ENCODE measurements at regions of chr6 and their contacts with region 1.

Region 1: GRCh38 chr6:2891768-2892170 is 11.3 kb downstream of the SERPINB9 start:
- DNase-seq: no peak
- ATAC-seq: no peak
- H3K4me3 ChIP-seq: no peak overlapping the region
- H3K27ac ChIP-seq: no peak overlapping the region
- H3K4me1 ChIP-seq: no peaks in the 10 kb centered on the region
- H3K27me3 ChIP-seq: no peaks in the 10 kb centered on the region
- CTCF ChIP-seq: no peak

Region 2: GRCh38 chr6:2841264-2842138 is 50.3 kb before region 1 on chr6 and contains the start of gene SERPINB1:
- CTCF ChIA-PET with region 1: no interaction called
- POLR2A ChIA-PET with region 1: no interaction called
- in situ Hi-C with region 1: no loop called
- intact Hi-C with region 1: no loop called
- DNase-seq: no peak
- ATAC-seq: peak; percentile 83
- H3K4me3 ChIP-seq: peak within 1 kb of the TSS; percentile 49 to 75
- H3K27ac ChIP-seq: peak within 1 kb of the TSS; percentile 87
- H3K4me1 ChIP-seq: peaks cover 51% of the 10 kb centered on the region
- H3K27me3 ChIP-seq: no peaks in the 10 kb centered on the region
- CTCF ChIP-seq: no peak
- total RNA-seq, gene SERPINB1: 40.8 TPM

Region 3: GRCh38 chr6:2863901-2864300 is 27.9 kb before region 1 on chr6:
- CTCF ChIA-PET with region 1: interaction called, 12 read pairs
- POLR2A ChIA-PET with region 1: no interaction called
- in situ Hi-C with region 1: no loop called
- intact Hi-C with region 1: no loop called
- DNase-seq: no peak
- ATAC-seq: no peak
- H3K4me3 ChIP-seq: no peak overlapping the region
- H3K27ac ChIP-seq: no peak overlapping the region
- H3K4me1 ChIP-seq: peaks cover 17% of the 10 kb centered on the region; the same call in 1 of the 2 replicates
- H3K27me3 ChIP-seq: no peaks in the 10 kb centered on the region
- CTCF ChIP-seq: no peak

Region 4: GRCh38 chr6:2931970-2932748 is 40.4 kb after region 1 on chr6:
- CTCF ChIA-PET with region 1: no interaction called
- POLR2A ChIA-PET with region 1: interaction called, 3 read pairs
- in situ Hi-C with region 1: loop called (anchors 5 kb)
- intact Hi-C with region 1: no loop called
- DNase-seq: peak; percentile 74
- ATAC-seq: peak; percentile 99
- H3K4me3 ChIP-seq: no peak overlapping the region
- H3K27ac ChIP-seq: no peak overlapping the region
- H3K4me1 ChIP-seq: no peaks in the 10 kb centered on the region
- H3K27me3 ChIP-seq: peaks cover 3% of the 10 kb centered on the region; the same call in 1 of the 2 replicates
- CTCF ChIP-seq: peak; percentile 99

Region 5: GRCh38 chr6:3258720-3259490 is 367.1 kb after region 1 on chr6 and contains the start of gene PSMG4:
- CTCF ChIA-PET with region 1: no interaction called
- POLR2A ChIA-PET with region 1: interaction called, 16 read pairs
- in situ Hi-C with region 1: no loop called
- intact Hi-C with region 1: no loop called
- DNase-seq: peak; percentile 33
- ATAC-seq: peak; percentile 93
- H3K4me3 ChIP-seq: peak within 1 kb of the TSS; percentile 86 to 94
- H3K27ac ChIP-seq: peak within 1 kb of the TSS; percentile 88
- H3K4me1 ChIP-seq: peaks cover 18% of the 10 kb centered on the region
- H3K27me3 ChIP-seq: no peaks in the 10 kb centered on the region
- CTCF ChIP-seq: no peak
- total RNA-seq, gene PSMG4: 27.0 TPM

Measured in Panc1 (cell line).